Transverse colon (tissue), 4 donors: ENCODE measurements at regions of chr17 and their contacts with region 1.

Region 1: DNA sequence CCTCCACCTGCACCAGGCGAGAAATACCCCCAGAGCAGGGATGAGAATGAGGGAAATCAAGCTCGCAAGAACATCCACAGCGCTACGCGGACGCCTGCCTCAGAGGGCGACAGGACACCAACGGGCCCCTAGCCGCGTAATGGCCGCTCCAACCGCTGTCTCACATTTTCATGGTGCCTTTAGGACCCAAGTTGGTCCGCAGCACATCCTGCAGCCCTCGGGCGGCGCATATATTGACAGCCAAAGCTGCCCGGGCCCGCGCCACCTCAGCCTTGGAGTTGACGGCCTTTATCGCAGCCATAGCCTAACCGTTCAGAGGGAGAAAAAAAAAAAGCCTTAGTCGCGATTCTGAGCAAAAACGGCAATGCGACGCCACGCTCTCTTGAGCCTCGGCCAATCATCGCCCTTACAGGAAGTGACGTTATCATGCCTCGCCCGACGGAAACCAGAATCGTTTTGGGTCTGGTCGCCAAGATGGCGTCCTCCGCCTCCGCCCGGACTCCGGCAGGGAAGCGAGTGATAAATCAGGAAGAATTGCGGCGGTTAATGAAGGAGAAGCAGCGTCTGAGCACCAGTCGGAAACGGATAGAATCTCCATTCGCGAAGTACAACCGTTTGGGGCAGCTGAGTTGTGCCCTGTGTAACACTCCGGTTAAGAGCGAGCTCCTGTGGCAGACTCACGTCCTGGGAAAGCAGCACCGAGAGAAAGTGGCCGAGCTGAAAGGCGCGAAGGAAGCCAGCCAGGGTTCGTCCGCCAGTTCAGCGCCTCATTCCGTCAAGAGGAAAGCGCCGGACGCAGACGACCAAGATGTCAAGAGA is at the starts of genes CCT6B and ZNF830:
- DNase-seq: peak; percentile 94
- H3K4me3 ChIP-seq: peak within 1 kb of the TSS; percentile 48 to 97 (median 80)
- H3K27ac ChIP-seq: peak within 1 kb of the TSS; percentile 90 to 97 (median 94)
- H3K4me1 ChIP-seq: peaks cover 11 to 27% (median 14%) of the 10 kb centered on the region in 4 donors
- H3K27me3 ChIP-seq: no peaks in the 10 kb centered on the region
- CTCF ChIP-seq: no peak
- EP300 ChIP-seq: no peak
- POLR2A ChIP-seq: peak; percentile 78
- total RNA-seq, gene CCT6B: 0.96 to 1.9 TPM in 2 of 4 donors, not detected in the others
- total RNA-seq, gene ZNF830: 10.9 to 21.7 (median 14.1) TPM

Region 2: DNA sequence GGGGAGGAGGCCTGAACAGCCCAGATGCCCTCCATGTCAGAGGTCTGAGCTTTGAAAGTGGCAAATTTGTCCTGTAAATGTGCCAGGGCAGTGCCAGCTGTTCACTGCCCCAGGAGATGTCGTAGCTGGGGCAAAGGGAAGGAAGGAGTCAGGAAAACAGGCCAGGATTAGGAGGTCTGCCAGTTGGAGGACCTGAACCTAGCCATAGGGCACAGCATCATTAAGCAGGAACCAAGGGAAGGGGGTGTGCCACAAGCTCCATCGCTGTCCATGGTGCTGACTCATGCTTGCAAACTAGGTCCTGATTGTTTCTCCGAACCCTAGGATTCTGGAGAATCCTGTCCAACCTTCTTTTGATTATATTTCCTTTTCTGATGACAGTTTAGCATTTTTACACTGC is 257.8 kb before region 1 on chr17:
- in situ Hi-C with region 1: no loop called
- intact Hi-C with region 1: no loop called
- DNase-seq: no peak
- H3K4me3 ChIP-seq: no peak overlapping the region
- H3K27ac ChIP-seq: no peak overlapping the region
- H3K4me1 ChIP-seq: no peaks in the 10 kb centered on the region
- H3K27me3 ChIP-seq: peaks cover 9% of the 10 kb centered on the region
- CTCF ChIP-seq: no peak
- EP300 ChIP-seq: no peak
- POLR2A ChIP-seq: no peak

Region 3: GRCh38 chr17:34980681-34981537 is 19.6 kb after region 1 on chr17:
- in situ Hi-C with region 1: no loop called
- intact Hi-C with region 1: loop called (anchors 1 kb)
- DNase-seq: peak; percentile 78
- H3K4me3 ChIP-seq: peak overlapping the region; percentile 73 to 97 (median 80)
- H3K27ac ChIP-seq: peak overlapping the region; percentile 96 to 100 (median 96)
- H3K4me1 ChIP-seq: peaks cover 3 to 29% (median 13%) of the 10 kb centered on the region in 4 donors
- H3K27me3 ChIP-seq: no peaks in the 10 kb centered on the region
- CTCF ChIP-seq: peak; percentile 33 to 57 (median 41)
- EP300 ChIP-seq: no peak
- POLR2A ChIP-seq: peak; percentile 63